ENCODE measurements at regions of chr4 and their contacts with region 1.

Region 1: GRCh38 chr4:82268050-82268825 is 105.6 kb downstream of the HNRNPD start:
- H3K4me3 Mint-ChIP-seq: peak overlapping the region; percentile 56
- H3K27ac Mint-ChIP-seq: peak overlapping the region; percentile 83
- H3K4me1 Mint-ChIP-seq: peaks cover 25% of the 10 kb centered on the region
- H3K27me3 Mint-ChIP-seq: peaks cover 10% of the 10 kb centered on the region

Region 2: DNA sequence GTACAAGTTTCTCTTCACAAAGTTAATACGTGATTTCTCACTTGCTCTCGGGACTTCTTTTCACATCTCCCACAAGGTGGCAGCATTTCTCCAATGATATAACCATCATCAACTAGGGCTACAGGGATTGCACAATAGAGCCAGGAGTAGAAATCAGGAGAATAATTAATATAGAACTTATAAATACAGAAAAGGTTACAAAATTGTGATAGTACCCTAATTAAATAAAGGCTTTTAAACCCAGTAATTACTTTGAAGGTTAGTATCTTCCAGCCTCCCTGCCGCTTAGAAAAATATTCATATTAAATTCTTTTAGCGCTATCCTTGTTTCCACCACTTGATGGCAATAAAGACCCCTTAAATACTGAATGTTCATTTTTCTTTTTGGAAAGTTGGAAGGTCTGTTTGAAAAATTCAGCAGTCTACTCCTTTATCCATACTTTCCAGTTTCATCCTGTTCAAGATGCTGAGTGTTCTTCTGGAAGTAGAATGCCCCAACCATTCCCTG is 862.3 kb before region 1 on chr4:
- intact Hi-C with region 1: loop called (anchors 1 kb)
- H3K4me3 Mint-ChIP-seq: no peak overlapping the region
- H3K27ac Mint-ChIP-seq: no peak overlapping the region
- H3K4me1 Mint-ChIP-seq: peaks cover 6% of the 10 kb centered on the region
- H3K27me3 Mint-ChIP-seq: peaks cover 2% of the 10 kb centered on the region

Region 3: GRCh38 chr4:81844717-81845116 is 423.5 kb before region 1 on chr4:
- intact Hi-C with region 1: loop called (anchors 5 kb)
- H3K4me3 Mint-ChIP-seq: no peak overlapping the region
- H3K27ac Mint-ChIP-seq: no peak overlapping the region
- H3K4me1 Mint-ChIP-seq: no peaks in the 10 kb centered on the region
- H3K27me3 Mint-ChIP-seq: no peaks in the 10 kb centered on the region

Region 4: GRCh38 chr4:81913427-81913879 is 354.8 kb before region 1 on chr4:
- intact Hi-C with region 1: loop called (anchors 10 kb)
- H3K4me3 Mint-ChIP-seq: no peak overlapping the region
- H3K27ac Mint-ChIP-seq: no peak overlapping the region
- H3K4me1 Mint-ChIP-seq: peaks cover 5% of the 10 kb centered on the region
- H3K27me3 Mint-ChIP-seq: no peaks in the 10 kb centered on the region

Region 5: DNA sequence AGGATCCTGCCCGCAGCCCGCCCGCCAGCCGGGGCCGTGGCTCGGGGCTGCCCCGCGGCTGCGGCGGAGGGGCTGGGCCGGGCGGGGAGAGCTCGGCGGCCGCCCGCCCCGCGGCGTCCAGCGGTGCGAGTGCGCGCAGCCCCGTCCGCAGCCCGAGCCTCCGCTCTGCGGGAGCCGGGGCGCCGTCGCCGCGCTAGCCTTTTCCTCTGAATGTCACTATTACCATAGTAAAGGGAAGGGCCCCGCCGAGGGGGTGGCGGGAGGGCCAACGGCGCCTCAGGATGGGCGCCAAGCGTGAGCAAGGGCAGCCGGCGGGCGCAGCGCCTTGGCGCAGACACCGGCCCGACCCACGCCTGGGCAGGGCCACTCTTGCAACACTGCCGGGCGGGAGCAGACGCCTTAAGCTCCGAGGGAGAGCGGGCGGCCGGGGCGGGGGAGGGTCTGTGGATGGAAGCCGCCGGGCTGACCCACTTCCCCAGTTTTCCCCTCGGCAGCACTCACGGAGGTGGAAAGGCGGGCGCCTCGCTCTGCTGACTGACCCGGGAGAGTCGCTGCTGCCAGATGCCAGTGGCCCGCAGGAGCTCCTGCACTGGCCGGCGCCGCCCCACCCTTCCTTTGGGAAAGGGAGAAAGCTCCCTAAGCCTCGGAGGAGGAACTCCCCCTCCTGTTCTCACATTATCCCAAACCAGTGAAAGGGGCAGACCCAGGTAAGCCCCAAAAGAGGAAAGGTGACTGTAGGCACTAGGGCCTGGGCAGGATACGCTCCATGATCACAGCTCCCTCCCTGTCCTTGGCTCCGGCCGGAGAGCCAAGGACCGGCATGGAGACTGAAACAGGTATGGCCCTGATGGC is 223.9 kb before region 1 on chr4:
- intact Hi-C with region 1: no loop called
- H3K4me3 Mint-ChIP-seq: peak overlapping the region; percentile 72
- H3K27ac Mint-ChIP-seq: no peak overlapping the region
- H3K4me1 Mint-ChIP-seq: peaks cover 14% of the 10 kb centered on the region
- H3K27me3 Mint-ChIP-seq: peaks cover 44% of the 10 kb centered on the region

Region 6: DNA sequence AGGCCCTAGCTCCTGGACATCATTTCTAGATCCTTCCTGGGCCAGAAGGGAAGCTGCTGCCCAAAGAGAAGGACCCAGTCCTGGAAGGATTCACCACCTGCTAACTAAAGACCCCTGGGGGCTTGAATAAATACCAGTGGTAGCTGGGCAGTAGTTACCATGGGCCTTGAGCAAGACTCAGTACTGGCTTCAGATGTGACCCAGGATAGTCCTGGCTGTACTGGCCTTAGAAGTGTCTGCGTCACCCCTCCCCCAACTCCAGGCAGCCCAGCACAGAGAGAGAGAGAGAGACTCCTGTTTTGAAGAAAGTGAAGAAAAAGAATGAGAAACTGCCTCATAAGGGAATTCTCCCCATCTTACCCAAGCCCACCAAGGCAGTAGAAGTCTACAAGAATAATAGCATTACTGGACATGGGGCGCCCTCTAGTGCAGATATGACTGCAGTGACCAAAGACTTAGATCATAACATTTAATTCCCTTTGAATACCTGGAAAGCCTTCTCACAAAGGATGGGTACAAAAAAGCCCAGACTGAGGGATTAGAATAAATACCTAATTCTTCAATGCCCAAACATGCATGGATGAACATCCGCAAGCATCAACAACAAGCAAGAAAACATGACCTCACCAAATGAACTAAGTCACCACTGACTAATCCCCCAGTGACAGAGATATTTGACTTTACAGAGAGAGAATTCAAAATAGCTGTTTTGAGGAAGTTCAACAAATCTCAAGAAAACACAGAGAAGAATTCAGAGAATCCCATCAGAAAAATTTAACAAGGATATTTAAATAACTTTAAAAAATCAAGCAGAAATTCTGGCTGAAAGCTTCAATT is 66.2 kb before region 1 on chr4:
- intact Hi-C with region 1: loop called (anchors 5 kb)
- H3K4me3 Mint-ChIP-seq: no peak overlapping the region
- H3K27ac Mint-ChIP-seq: no peak overlapping the region
- H3K4me1 Mint-ChIP-seq: peaks cover 10% of the 10 kb centered on the region
- H3K27me3 Mint-ChIP-seq: no peaks in the 10 kb centered on the region

Region 7: DNA sequence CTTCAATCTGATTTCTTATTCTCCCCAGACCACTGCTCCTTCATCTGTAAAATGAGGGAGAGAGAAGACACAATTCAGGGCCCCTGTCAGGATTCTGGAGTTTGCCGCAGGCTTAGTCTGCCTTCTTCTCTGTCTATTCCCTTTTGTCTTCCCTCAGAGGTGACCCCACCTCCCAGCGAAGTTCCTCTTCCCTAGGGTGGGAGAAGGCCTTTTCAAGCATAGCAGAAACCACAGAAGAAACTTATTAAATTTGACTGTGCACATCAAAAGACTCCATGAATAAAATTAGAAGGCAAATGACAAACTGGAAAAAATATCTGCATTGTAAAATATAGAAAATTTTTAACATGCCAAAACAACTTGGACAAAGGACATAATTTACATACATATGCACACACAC is 43.2 kb before region 1 on chr4:
- intact Hi-C with region 1: loop called (anchors 5 kb)
- H3K4me3 Mint-ChIP-seq: no peak overlapping the region
- H3K27ac Mint-ChIP-seq: peak overlapping the region; percentile 42
- H3K4me1 Mint-ChIP-seq: peaks cover 28% of the 10 kb centered on the region
- H3K27me3 Mint-ChIP-seq: no peaks in the 10 kb centered on the region